Dorsolateral prefrontal cortex (tissue), 120 donors: ENCODE measurements at regions of chr4 and their contacts with region 1.

Region 1: DNA sequence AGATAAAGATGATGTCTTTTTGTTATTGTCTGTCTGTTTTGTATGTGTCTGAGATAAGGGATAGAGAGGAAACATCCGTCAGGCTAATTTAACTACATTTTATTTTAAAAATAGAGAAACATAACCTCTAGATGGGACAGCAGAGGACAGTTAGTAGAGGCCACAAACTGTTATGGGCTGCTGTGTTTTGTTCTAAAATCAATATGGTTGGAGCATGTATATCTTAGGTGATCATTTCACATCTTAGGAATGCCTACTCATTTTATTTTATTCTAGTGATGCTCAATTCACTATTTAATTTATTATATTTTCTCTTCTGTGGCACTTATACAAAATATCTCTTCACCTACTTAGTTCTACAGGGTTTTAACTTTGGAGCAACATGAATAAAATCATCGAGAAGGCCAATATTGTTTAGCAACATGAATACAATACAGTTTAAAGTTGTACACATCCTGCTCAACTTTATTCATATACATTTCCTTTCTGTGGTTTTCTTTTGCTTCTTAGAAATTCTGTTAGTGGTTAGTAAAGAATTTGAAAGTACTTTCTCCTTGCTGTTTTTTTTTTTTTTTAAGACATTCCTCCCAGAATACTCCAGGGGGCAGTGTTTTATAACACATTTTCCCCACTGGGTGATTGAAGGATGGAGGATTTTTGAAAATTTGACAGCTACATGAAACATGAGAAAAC is 392.9 kb downstream of the UNC5C start:
- DNase-seq: no peak
- H3K4me3 ChIP-seq: peak overlapping the region in 1 of 59 donors; percentile 16
- H3K27ac ChIP-seq: peak overlapping the region in 36 of 59 donors; percentile 24 to 86 (median 68)
- H3K27me3 ChIP-seq: no peaks in the 10 kb centered on the region
- CTCF ChIP-seq: peak; percentile 70 to 92 (median 81)

Region 2: GRCh38 chr4:95129821-95130311 is 26.0 kb before region 1 on chr4:
- intact Hi-C with region 1: no loop called
- DNase-seq: peak in 1 of 10 donors; percentile 21
- H3K4me3 ChIP-seq: no peak overlapping the region
- H3K27ac ChIP-seq: peak overlapping the region in 1 of 59 donors; percentile 9
- H3K27me3 ChIP-seq: no peaks in the 10 kb centered on the region
- CTCF ChIP-seq: no peak

Region 3: DNA sequence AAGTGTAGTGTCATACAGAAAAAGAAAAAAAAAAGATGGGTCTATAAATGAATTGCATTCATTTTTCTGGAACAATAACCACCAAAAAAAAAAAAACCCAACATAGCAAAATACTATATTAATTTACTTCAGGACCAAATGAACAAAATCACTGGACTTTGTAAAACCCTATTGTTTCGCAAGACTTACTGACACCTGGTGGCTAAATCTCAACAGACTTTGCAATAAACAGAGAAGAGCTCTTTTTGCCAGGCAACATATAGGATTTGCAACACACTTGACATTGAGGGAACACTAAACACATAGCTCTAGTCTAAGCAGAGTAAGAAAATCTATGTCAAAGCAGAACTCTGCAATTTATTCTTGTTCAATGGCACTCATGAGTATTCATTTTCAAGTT is 1997.1 kb after region 1 on chr4:
- intact Hi-C with region 1: loop called in 1 of 2 experiments (anchors 10 kb)
- DNase-seq: no peak
- H3K4me3 ChIP-seq: no peak overlapping the region
- H3K27ac ChIP-seq: peak overlapping the region in 1 of 59 donors; percentile 58
- H3K27me3 ChIP-seq: no peaks in the 10 kb centered on the region
- CTCF ChIP-seq: peak in 50 of 56 donors; percentile 14 to 58 (median 39)